Activated CD4-positive, alpha-beta T cell treated with anti-CD3 and anti-CD28 coated beads for 36 hours (primary cell): ENCODE measurements at regions of chr4 and their contacts with region 1.

Region 1: DNA sequence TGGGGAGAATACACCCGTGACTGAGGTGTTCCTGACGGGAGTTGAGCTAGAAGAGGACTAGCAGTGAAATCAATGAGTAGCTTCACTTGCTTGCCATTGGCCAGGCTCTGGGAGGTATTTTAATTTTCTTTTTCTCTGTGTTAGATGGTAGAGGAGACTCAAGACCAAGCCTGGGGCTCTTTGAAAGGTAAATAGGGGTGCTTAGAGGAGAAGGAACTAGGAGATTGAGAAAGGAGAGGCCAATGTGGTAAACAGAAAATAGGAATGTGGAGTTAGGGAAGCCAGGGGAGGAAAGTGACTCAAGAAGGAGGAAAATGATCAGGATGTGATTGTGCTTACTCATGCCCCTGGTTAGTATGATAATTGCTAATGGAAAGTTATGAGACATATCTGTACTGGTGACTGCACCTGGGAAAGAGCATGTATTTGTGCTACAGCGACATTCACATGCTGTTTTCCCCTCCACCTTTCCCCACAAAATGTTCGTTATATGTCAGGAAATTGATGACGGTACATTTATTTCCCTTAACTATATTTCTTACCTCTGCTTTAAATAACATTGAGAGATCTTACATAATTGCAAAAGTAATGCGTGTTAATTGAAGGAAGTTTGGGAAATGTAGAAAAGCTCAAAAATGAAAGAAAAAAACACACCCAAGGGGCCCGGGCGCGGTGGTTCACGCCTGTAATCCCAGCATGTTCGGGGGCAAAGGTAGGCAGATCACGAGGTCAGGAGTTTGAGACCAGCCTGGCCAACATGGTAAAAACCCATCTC is 16.9 kb upstream of the LRBA start:
- DNase-seq: peak; percentile 41
- ATAC-seq: peak; percentile 69
- H3K4me3 Mint-ChIP-seq: peak overlapping the region; percentile 62
- H3K27ac Mint-ChIP-seq: peak overlapping the region; percentile 71
- H3K4me1 Mint-ChIP-seq: peaks cover 38% of the 10 kb centered on the region
- H3K27me3 Mint-ChIP-seq: peaks cover 3% of the 10 kb centered on the region

Region 2: GRCh38 chr4:150152766-150153165 is 879.3 kb before region 1 on chr4:
- CTCF ChIA-PET with region 1: no interaction called
- POLR2A ChIA-PET with region 1: no interaction called
- intact Hi-C with region 1: no loop called
- DNase-seq: no peak
- ATAC-seq: no peak
- H3K4me3 Mint-ChIP-seq: no peak overlapping the region
- H3K27ac Mint-ChIP-seq: no peak overlapping the region
- H3K4me1 Mint-ChIP-seq: no peaks in the 10 kb centered on the region
- H3K27me3 Mint-ChIP-seq: peaks cover 2% of the 10 kb centered on the region

Region 3: GRCh38 chr4:150395872-150396271 is 636.1 kb before region 1 on chr4:
- CTCF ChIA-PET with region 1: no interaction called
- POLR2A ChIA-PET with region 1: no interaction called
- intact Hi-C with region 1: loop called in 1 of 2 experiments (anchors 5 kb)
- DNase-seq: peak; percentile 55
- ATAC-seq: peak; percentile 95
- H3K4me3 Mint-ChIP-seq: no peak overlapping the region
- H3K27ac Mint-ChIP-seq: peak overlapping the region; percentile 84
- H3K4me1 Mint-ChIP-seq: peaks cover 15% of the 10 kb centered on the region
- H3K27me3 Mint-ChIP-seq: no peaks in the 10 kb centered on the region

Region 4: DNA sequence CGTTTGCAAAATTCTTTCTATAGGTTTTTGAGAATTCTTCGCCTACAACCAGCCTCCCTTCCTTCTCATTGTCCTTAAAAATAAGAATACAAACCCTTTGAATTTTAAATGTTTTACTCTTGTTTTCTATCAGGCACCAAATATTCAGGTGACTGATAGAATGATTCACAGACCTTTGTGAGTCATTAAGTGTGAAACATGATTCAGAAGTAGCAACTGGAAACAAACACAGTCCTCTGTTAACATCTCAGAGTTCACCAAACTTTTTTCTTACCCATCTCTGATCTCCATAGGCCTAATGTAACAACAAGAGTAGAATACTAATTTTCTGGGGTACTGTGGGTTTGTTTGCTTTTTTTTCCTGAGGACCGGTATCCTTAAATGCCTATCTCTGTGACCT is 513.5 kb before region 1 on chr4:
- CTCF ChIA-PET with region 1: no interaction called
- POLR2A ChIA-PET with region 1: no interaction called
- intact Hi-C with region 1: loop called in 1 of 2 experiments (anchors 2 kb)
- DNase-seq: no peak
- ATAC-seq: peak; percentile 98
- H3K4me3 Mint-ChIP-seq: no peak overlapping the region
- H3K27ac Mint-ChIP-seq: peak overlapping the region; percentile 52
- H3K4me1 Mint-ChIP-seq: peaks cover 15% of the 10 kb centered on the region
- H3K27me3 Mint-ChIP-seq: no peaks in the 10 kb centered on the region

Region 5: DNA sequence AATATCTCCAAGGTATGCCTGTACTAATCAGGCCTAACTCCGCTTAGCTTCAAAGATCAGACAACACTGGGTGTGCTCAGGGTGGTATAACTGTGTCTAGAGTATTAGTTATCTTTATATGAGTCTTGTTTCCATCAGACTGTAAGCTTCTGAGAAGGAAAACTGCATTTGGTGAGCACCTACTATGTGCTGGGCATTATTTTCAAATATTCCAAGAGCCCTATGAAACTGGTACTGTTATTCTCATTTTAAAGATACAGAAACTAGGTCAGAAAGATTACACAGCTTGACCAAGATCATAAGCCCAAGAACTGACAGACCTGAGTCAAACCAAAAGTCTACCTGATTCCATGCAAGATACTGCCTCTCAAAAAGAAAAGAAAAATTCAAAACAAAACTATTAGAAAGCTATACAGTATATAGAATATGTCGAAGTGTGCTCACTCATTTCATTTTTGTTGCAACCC is 61.3 kb before region 1 on chr4:
- CTCF ChIA-PET with region 1: no interaction called
- POLR2A ChIA-PET with region 1: no interaction called
- intact Hi-C with region 1: loop called (anchors 1 to 2 kb)
- DNase-seq: no peak
- ATAC-seq: peak; percentile 88
- H3K4me3 Mint-ChIP-seq: no peak overlapping the region
- H3K27ac Mint-ChIP-seq: peak overlapping the region; percentile 51
- H3K4me1 Mint-ChIP-seq: peaks cover 47% of the 10 kb centered on the region
- H3K27me3 Mint-ChIP-seq: no peaks in the 10 kb centered on the region

Region 6: DNA sequence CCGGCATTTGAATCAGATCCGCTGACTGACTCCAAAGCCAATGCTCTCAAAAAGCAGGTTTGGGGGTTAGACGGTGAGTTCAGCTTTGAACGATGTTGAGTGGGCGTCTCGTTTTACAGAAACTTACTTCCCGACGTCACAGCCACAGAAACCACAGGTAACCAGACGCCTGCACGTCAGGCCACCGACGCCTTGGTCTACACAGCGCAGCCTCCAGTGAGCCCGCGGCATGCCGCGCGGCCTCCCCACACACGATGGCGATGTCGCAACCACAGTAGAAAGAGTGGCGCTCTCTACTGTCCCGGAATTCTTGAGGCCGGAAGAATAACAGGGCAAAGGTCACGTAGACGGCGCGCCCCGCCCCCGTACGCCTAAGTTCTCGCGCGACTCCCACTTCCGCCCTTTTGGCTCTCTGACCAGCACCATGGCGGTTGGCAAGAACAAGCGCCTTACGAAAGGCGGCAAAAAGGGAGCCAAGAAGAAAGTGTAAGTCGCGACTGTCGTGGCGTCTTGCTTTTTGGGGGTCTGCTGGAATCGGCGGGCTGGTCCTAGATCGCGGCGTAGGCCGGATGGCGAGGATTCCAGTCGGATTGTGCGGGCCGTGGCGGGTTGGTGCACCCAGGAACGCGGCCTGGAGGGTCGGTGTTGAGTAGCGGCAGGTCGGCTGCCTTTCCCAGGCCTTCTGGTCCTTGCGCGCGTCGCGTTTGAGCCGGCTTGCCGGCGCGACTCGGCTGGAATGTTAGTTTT is 67.4 kb after region 1 on chr4 and contains the start of gene RPS3A:
- CTCF ChIA-PET with region 1: interaction called, 4 read pairs
- POLR2A ChIA-PET with region 1: interaction called, 4 read pairs
- intact Hi-C with region 1: loop called (anchors 1 kb)
- DNase-seq: peak; percentile 98
- ATAC-seq: peak; percentile 86
- H3K4me3 Mint-ChIP-seq: peak within 1 kb of the TSS; percentile 89
- H3K27ac Mint-ChIP-seq: peak within 1 kb of the TSS; percentile 100
- H3K4me1 Mint-ChIP-seq: peaks cover 42% of the 10 kb centered on the region
- H3K27me3 Mint-ChIP-seq: no peaks in the 10 kb centered on the region
- total RNA-seq, gene RPS3A: 2,077 to 2,995 TPM

Region 7: GRCh38 chr4:151420250-151420807 is 388.3 kb after region 1 on chr4:
- CTCF ChIA-PET with region 1: no interaction called
- POLR2A ChIA-PET with region 1: no interaction called
- intact Hi-C with region 1: no loop called
- DNase-seq: no peak
- ATAC-seq: no peak
- H3K4me3 Mint-ChIP-seq: no peak overlapping the region
- H3K27ac Mint-ChIP-seq: no peak overlapping the region
- H3K4me1 Mint-ChIP-seq: no peaks in the 10 kb centered on the region
- H3K27me3 Mint-ChIP-seq: peaks cover 6% of the 10 kb centered on the region